Naive thymus-derived CD4-positive, alpha-beta T cell (primary cell): ENCODE measurements at regions of chr3 and their contacts with region 1.

Region 1: DNA sequence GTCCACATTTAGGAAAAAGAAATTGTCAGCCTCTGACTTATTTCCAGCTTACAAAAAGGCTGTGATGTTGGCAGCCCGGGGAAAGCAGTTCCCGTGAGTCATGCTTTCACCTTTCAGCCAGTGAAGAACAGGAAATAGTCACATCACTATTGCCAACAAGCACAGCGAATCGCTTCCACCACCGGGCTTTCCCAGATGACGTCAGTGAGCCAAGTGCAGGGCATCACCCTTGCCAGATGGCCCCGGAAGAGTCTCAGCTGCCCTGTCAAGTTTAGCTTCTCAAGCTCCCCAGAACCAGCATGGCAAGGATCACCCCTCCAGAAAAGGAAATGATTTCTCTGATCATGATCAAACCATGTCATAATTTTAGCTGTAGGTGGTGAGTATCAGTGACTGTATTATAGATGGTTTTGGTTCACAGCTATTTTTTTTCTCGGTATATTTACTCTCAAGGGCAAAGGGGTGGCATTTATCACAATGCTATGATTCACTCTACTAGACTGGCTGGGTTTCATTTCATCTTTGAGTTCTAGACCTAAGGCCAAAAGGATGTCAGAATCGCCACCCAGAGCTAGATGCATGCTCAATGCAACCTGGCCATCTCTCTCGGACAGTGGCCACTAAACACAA is 32.9 kb downstream of the B3GNT5 start:
- DNase-seq: peak; percentile 60 to 96 (median 83)
- ATAC-seq: peak; percentile 97
- H3K4me3 ChIP-seq: no peak overlapping the region
- H3K4me3 Mint-ChIP-seq: peak overlapping the region in 9 of 10 donors; percentile 47 to 81 (median 68)
- H3K27ac ChIP-seq: peak overlapping the region; percentile 44
- H3K27ac Mint-ChIP-seq: peak overlapping the region; percentile 73 to 93 (median 86)
- H3K4me1 ChIP-seq: peaks cover 14 to 19% of the 10 kb centered on the region in 2 donors
- H3K4me1 Mint-ChIP-seq: peaks cover 0 to 30% (median 18%) of the 10 kb centered on the region in 7 donors
- H3K27me3 ChIP-seq: no peaks in the 10 kb centered on the region
- H3K27me3 Mint-ChIP-seq: no peaks in the 10 kb centered on the region

Region 2: GRCh38 chr3:183224180-183224970 is 61.6 kb before region 1 on chr3:
- CTCF ChIA-PET with region 1: no interaction called
- POLR2A ChIA-PET with region 1: no interaction called
- intact Hi-C with region 1: loop called in 1 of 2 experiments (anchors 2 kb)
- DNase-seq: peak in 8 of 9 donors; percentile 20 to 57 (median 47)
- ATAC-seq: peak; percentile 94
- H3K4me3 ChIP-seq: peak overlapping the region; percentile 25
- H3K4me3 Mint-ChIP-seq: peak overlapping the region; percentile 66 to 83 (median 74)
- H3K27ac ChIP-seq: no peak overlapping the region
- H3K27ac Mint-ChIP-seq: peak overlapping the region in 7 of 9 donors; percentile 5 to 79 (median 32)
- H3K4me1 ChIP-seq: peaks cover 0 to 4% of the 10 kb centered on the region in 2 donors
- H3K4me1 Mint-ChIP-seq: peaks cover 7 to 16% (median 15%) of the 10 kb centered on the region in 7 donors
- H3K27me3 ChIP-seq: no peaks in the 10 kb centered on the region
- H3K27me3 Mint-ChIP-seq: no peaks in the 10 kb centered on the region

Region 3: GRCh38 chr3:183252973-183253901 is 32.7 kb before region 1 on chr3 and contains the start of gene B3GNT5:
- CTCF ChIA-PET with region 1: no interaction called
- POLR2A ChIA-PET with region 1: interaction called, 3 read pairs
- intact Hi-C with region 1: loop called (anchors 1 to 5 kb)
- DNase-seq: peak in 8 of 9 donors; percentile 3 to 60 (median 20)
- ATAC-seq: peak; percentile 77
- H3K4me3 ChIP-seq: peak within 1 kb of the TSS; percentile 73
- H3K4me3 Mint-ChIP-seq: peak within 1 kb of the TSS; percentile 73 to 86 (median 78)
- H3K27ac ChIP-seq: no peak within 1 kb of the TSS
- H3K27ac Mint-ChIP-seq: peak within 1 kb of the TSS in 2 of 9 donors; percentile 9 to 46
- H3K4me1 ChIP-seq: peaks cover 0 to 3% of the 10 kb centered on the region in 2 donors
- H3K4me1 Mint-ChIP-seq: peaks cover 0 to 14% (median 11%) of the 10 kb centered on the region in 7 donors
- H3K27me3 ChIP-seq: peaks cover 0 to 5% of the 10 kb centered on the region in 2 donors
- H3K27me3 Mint-ChIP-seq: peaks cover 18 to 54% (median 43%) of the 10 kb centered on the region in 5 donors
- total RNA-seq, gene B3GNT5: 0.22 to 13.1 (median 1.5) TPM

Region 4: DNA sequence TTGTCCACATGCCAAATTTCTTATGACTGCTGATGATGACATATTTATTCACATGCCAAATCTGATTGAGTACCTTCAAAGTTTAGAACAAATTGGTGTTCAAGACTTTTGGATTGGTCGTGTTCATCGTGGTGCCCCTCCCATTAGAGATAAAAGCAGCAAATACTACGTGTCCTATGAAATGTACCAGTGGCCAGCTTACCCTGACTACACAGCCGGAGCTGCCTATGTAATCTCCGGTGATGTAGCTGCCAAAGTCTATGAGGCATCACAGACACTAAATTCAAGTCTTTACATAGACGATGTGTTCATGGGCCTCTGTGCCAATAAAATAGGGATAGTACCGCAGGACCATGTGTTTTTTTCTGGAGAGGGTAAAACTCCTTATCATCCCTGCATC is 15.6 kb before region 1 on chr3:
- CTCF ChIA-PET with region 1: no interaction called
- POLR2A ChIA-PET with region 1: interaction called, 3 read pairs
- intact Hi-C with region 1: loop called in 1 of 2 experiments (anchors 2 kb)
- DNase-seq: no peak
- ATAC-seq: no peak
- H3K4me3 ChIP-seq: no peak overlapping the region
- H3K4me3 Mint-ChIP-seq: no peak overlapping the region
- H3K27ac ChIP-seq: no peak overlapping the region
- H3K27ac Mint-ChIP-seq: no peak overlapping the region
- H3K4me1 ChIP-seq: no peaks in the 10 kb centered on the region
- H3K4me1 Mint-ChIP-seq: peaks cover 0 to 4% (median under 1%) of the 10 kb centered on the region in 7 donors
- H3K27me3 ChIP-seq: no peaks in the 10 kb centered on the region
- H3K27me3 Mint-ChIP-seq: peaks cover 0 to 9% (median 0%) of the 10 kb centered on the region in 5 donors

Region 5: DNA sequence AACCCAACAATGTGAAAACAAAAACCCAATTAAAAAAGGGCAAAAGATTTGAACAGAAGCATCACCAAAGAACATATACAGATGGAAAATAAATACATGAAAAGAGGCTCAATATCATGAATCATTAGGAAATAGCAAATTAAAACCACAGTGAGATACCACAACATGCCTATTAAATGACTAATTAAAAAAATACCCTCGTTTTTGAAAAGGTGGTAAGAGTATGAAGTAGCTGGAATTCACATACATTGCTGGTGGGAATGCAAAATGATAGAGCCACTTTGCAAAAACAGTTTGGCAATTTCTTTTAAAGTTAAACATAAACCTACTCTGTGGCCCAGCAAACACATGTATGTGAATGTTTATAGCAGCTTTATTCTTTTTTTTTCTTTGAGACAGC is 42.9 kb after region 1 on chr3:
- CTCF ChIA-PET with region 1: no interaction called
- POLR2A ChIA-PET with region 1: no interaction called
- intact Hi-C with region 1: no loop called
- DNase-seq: no peak
- ATAC-seq: no peak
- H3K4me3 ChIP-seq: no peak overlapping the region
- H3K4me3 Mint-ChIP-seq: no peak overlapping the region
- H3K27ac ChIP-seq: no peak overlapping the region
- H3K27ac Mint-ChIP-seq: no peak overlapping the region
- H3K4me1 ChIP-seq: no peaks in the 10 kb centered on the region
- H3K4me1 Mint-ChIP-seq: peaks cover 0 to 15% (median 4%) of the 10 kb centered on the region in 7 donors
- H3K27me3 ChIP-seq: no peaks in the 10 kb centered on the region
- H3K27me3 Mint-ChIP-seq: peaks cover 0 to 11% (median 0%) of the 10 kb centered on the region in 5 donors